PC-3 (cell line): ENCODE measurements at regions of chr13 and their contacts with region 1.

Region 1: DNA sequence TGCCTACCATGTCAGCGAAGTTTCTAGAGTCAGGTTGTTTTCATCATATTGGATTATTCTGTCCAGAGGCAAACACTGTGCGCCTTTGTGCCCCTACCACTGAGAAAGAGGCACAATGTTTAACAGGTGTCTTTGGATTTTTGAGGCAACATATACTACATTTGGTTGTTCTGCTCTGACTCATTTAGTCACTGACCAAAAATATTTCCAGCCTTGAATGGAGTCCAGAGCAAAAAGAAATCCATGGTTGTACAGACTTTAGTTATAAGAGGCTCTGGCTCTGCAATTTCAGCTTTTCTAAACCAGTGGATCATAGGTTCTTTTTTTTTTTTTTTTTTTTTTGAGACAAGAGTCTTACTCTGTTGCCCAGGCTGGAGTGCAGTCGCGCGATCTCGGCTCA is 35.7 kb downstream of the LACC1 start:
- DNase-seq: no peak
- ATAC-seq: no peak
- H3K4me3 ChIP-seq: no peak overlapping the region
- H3K27ac ChIP-seq: no peak overlapping the region
- H3K4me1 ChIP-seq: no peaks in the 10 kb centered on the region
- H3K27me3 ChIP-seq: no peaks in the 10 kb centered on the region
- CTCF ChIP-seq: no peak

Region 2: GRCh38 chr13:43939107-43939506 is 23.7 kb after region 1 on chr13:
- CTCF ChIA-PET with region 1: no interaction called
- POLR2A ChIA-PET with region 1: no interaction called
- intact Hi-C with region 1: no loop called
- DNase-seq: peak; percentile 23
- ATAC-seq: peak; percentile 95
- H3K4me3 ChIP-seq: no peak overlapping the region
- H3K27ac ChIP-seq: no peak overlapping the region
- H3K4me1 ChIP-seq: peaks cover 6% of the 10 kb centered on the region; the same call in 1 of the 2 replicates
- H3K27me3 ChIP-seq: no peaks in the 10 kb centered on the region
- CTCF ChIP-seq: no peak

Region 3: GRCh38 chr13:44128552-44129001 is 213.1 kb after region 1 on chr13:
- CTCF ChIA-PET with region 1: no interaction called
- POLR2A ChIA-PET with region 1: no interaction called
- intact Hi-C with region 1: loop called (anchors 10 kb)
- DNase-seq: no peak
- ATAC-seq: no peak
- H3K4me3 ChIP-seq: no peak overlapping the region
- H3K27ac ChIP-seq: no peak overlapping the region
- H3K4me1 ChIP-seq: peaks cover 20% of the 10 kb centered on the region
- H3K27me3 ChIP-seq: no peaks in the 10 kb centered on the region
- CTCF ChIP-seq: no peak